Activated T-helper 1 cell treated with anti-CD3 and anti-CD28 coated beads, Interleukin-12 subunit alpha, Interleukin-12 subunit beta, Interleukin-2, Interleukin-4 antibody, amounts not matched to agents 30 ng/mL and 10 ng/mL and 1 ng/mL, durations not matched to agents 14 hours and 24 hours and 36 hours (primary cell): ENCODE measurements at regions of chr7 and their contacts with region 1.

Region 1: GRCh38 chr7:123494193-123494796 is 40.1 kb downstream of the IQUB start:
- DNase-seq: no peak
- H3K4me3 Mint-ChIP-seq: no peak overlapping the region
- H3K27ac Mint-ChIP-seq: no peak overlapping the region
- H3K4me1 Mint-ChIP-seq: no peaks in the 10 kb centered on the region
- H3K27me3 Mint-ChIP-seq: peaks cover 6% of the 10 kb centered on the region

Region 2: DNA sequence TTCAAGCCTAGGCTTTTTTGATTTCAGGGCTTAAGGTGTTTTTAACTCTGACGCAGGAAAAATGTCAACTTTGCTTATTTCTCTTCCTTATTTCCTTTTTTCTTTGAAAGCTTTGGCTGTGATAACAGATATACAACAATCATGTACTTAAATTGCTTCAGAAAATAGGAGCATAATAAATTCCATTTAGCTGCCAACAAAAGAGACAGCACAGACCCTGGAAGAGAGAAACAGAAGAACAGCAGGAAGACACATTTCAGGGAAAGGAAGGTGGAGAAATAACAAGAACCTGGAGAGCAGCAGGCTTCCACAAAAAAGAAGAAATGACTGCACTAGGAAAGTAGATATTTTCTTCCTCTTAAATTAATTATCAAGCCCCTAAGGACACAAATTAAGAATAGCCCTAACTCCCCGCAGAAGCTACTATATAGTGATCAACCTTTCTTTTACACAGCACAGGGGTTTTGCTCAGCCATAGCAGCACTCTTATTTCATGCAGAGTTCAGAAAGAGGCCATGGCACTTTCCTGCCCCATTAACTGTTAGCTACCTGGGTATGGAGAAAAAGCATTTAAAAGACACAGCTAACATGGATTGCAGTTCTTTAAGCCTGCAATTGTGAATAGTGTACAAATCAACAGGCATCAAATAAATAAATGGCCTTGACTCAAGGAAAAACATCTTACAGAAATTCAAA is 21.4 kb before region 1 on chr7:
- intact Hi-C with region 1: no loop called
- DNase-seq: no peak
- H3K4me3 Mint-ChIP-seq: no peak overlapping the region
- H3K27ac Mint-ChIP-seq: no peak overlapping the region
- H3K4me1 Mint-ChIP-seq: no peaks in the 10 kb centered on the region
- H3K27me3 Mint-ChIP-seq: no peaks in the 10 kb centered on the region

Region 3: GRCh38 chr7:123534383-123535260 is 40.3 kb after region 1 on chr7 and contains the start of gene IQUB:
- intact Hi-C with region 1: loop called (anchors 1 kb)
- DNase-seq: peak; percentile 89
- H3K4me3 Mint-ChIP-seq: peak within 1 kb of the TSS; percentile 91
- H3K27ac Mint-ChIP-seq: peak within 1 kb of the TSS; percentile 88
- H3K4me1 Mint-ChIP-seq: peaks cover 26% of the 10 kb centered on the region
- H3K27me3 Mint-ChIP-seq: peaks cover 30% of the 10 kb centered on the region
- total RNA-seq, gene IQUB: 0.44 TPM in 1 of 2 replicates, not detected in the other

Region 4: DNA sequence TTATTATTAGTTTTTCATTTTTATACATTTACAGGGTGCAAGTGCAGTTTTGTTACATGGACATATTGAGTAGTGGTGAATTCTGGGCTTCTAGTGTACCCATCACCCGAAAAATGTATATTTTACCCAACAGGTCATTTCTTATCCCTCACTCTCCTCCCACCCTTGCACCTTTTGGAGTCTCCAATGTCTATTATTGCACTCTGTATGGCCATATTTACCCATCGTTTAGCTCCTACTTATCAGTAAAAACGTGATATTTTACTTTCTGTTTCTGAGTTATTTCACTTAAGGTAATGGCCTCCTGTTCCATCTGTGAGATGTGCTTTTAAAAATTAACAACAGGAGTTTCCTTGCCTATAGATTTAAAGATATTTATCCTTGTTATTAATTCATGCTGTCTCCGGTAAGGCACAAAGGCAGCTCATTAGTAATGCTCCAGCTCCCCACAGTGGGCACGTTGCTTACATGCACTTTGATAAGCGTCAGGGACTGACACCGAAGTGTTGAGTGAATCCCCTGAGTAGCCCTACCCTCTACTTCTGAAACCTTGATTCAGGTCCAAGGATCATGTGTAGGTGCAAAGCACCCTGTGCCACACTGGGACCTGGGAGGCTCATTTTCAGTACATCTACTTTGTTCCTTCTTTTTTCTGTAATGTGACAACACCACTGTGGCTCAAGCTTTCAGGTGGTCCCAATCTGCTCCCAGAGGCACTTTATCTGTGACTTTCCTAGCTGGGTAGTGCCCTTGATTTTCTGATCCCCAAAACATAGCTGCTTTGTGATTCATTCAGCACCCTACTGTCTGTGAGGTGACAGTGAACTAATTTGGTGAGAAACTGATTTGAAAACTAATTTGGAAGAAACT is 377.9 kb after region 1 on chr7:
- intact Hi-C with region 1: loop called (anchors 2 kb)
- DNase-seq: no peak
- H3K4me3 Mint-ChIP-seq: no peak overlapping the region
- H3K27ac Mint-ChIP-seq: no peak overlapping the region
- H3K4me1 Mint-ChIP-seq: no peaks in the 10 kb centered on the region
- H3K27me3 Mint-ChIP-seq: peaks cover 3% of the 10 kb centered on the region